ENCODE measurements at regions of chr15 and their contacts with region 1.

Region 1: DNA sequence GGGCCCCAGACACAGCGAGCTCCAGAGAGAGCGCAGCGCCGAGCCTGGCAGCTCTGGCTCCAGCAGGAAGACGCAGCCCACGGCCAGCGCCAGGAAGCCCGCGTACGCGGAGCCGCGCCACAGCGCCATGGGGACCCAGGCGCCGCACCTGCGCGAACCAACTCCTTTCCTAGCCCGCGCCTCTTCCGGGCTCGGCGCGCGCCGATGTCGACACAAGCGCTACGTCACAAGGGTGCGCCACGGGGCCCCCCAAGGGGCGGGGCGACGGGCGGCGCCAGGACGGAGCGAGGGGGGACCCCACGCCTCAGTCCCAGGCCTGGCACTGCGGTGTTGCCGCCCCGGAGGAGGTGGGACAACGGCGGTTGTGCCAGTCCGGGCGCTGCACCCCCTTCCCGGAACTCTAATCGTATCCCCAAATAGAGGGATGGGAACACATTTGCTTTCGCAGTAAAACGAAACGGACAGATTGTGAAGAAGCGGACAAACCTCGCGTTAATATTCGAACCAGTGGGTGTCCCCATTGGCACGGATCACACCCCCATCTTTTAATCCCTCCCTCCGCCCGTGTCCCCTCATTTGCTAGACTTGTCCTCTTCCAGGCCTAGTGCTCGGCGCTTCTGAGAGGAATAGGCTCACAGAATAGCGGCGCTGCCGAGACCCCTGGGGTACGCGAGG is at the start of gene ADPGK:
- DNase-seq: peak; percentile 90
- H3K4me3 Mint-ChIP-seq: peak within 1 kb of the TSS; percentile 93
- H3K27ac Mint-ChIP-seq: peak within 1 kb of the TSS; percentile 95
- H3K4me1 Mint-ChIP-seq: peaks cover 42% of the 10 kb centered on the region
- H3K27me3 Mint-ChIP-seq: no peaks in the 10 kb centered on the region
- total RNA-seq, gene ADPGK: 41.4 to 43.6 TPM

Region 2: DNA sequence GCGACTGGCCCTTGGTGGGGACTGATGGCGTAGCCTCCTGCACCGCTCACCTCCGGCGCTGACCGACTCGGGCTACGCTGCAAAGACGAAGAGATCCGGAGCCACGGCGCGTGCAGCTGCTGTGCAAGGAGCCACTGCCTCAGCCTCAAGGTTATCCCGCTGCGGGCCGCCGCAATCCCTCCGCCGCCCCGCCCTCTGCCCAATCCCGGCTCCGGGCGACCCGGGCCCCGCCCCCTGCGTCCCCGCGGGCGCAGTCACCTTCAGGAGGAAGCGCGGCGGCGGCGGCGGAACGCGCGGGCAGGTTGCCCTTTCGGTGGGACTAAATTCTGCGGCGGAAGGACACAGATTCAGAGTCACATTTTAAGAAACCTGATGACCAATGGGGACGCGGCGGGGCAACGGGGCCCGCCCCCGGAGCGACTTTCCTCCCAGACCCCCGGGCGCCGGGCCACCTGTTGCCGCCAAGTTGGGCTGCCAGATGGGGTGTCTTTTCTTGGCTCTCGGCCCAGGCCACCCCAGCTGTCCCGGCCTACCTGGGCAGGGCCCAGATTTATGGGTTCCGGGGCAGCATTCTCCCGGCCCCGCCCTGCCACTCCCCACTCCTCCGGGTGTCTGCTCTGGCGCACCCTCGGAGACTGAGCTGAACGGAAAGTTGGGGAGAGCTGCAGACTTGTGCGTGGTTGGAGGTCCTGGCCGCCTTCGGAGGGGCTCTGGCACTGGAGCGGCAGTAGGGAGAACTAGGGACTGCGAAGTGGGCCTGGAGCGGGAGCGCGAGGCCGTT is 552.4 kb before region 1 on chr15 and contains the start of gene PKM:
- CTCF ChIA-PET with region 1: no interaction called
- intact Hi-C with region 1: loop called (anchors 5 kb)
- DNase-seq: peak; percentile 98
- H3K4me3 Mint-ChIP-seq: peak within 1 kb of the TSS; percentile 100
- H3K27ac Mint-ChIP-seq: peak within 1 kb of the TSS; percentile 99
- H3K4me1 Mint-ChIP-seq: peaks cover 25% of the 10 kb centered on the region
- H3K27me3 Mint-ChIP-seq: no peaks in the 10 kb centered on the region
- total RNA-seq, gene PKM: 1,794 to 1,797 TPM

Region 3: GRCh38 chr15:72685925-72686794 is 97.5 kb before region 1 on chr15 and contains the starts of genes BBS4 and HIGD2B:
- CTCF ChIA-PET with region 1: no interaction called
- intact Hi-C with region 1: loop called (anchors 1 kb)
- DNase-seq: peak; percentile 91
- H3K4me3 Mint-ChIP-seq: peak within 1 kb of the TSS; percentile 89
- H3K27ac Mint-ChIP-seq: peak within 1 kb of the TSS; percentile 87
- H3K4me1 Mint-ChIP-seq: peaks cover 15% of the 10 kb centered on the region
- H3K27me3 Mint-ChIP-seq: no peaks in the 10 kb centered on the region
- total RNA-seq, gene BBS4: 16.3 to 17.4 TPM
- total RNA-seq, gene HIGD2B: 0.19 to 0.27 TPM

Region 4: DNA sequence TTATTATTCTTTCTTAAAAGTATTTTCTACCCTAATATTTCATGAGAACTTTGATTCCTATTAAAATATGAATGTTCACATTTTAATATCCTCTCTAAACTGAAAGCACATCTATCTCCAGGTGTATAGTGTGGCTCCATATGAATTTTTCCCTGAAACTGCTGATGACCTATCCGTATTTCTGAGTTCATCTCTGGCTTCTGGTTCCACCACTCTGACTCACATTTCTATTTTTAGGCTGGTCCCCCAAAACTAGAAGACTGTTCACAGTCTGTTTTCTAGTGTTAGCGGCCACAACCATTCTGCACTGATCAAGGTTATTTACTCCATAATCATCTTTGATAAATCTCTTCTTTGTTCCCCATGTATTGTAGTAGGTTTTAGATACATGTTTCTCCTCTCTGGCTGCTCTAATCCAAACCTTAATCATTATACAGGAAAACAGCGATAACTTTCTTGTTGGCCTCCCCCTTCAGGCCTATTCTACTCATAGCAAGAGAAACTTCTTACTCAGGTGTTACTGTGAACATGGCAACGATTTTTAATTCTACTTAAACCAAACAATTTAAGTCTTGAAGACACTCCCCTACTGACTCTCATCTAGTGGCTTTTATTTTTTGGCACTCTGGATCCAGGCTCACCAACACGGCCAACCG is 12.9 kb before region 1 on chr15:
- CTCF ChIA-PET with region 1: no interaction called
- intact Hi-C with region 1: loop called (anchors 1 kb)
- DNase-seq: no peak
- H3K4me3 Mint-ChIP-seq: no peak overlapping the region
- H3K27ac Mint-ChIP-seq: peak overlapping the region; percentile 59
- H3K4me1 Mint-ChIP-seq: peaks cover 23% of the 10 kb centered on the region
- H3K27me3 Mint-ChIP-seq: no peaks in the 10 kb centered on the region

Region 5: DNA sequence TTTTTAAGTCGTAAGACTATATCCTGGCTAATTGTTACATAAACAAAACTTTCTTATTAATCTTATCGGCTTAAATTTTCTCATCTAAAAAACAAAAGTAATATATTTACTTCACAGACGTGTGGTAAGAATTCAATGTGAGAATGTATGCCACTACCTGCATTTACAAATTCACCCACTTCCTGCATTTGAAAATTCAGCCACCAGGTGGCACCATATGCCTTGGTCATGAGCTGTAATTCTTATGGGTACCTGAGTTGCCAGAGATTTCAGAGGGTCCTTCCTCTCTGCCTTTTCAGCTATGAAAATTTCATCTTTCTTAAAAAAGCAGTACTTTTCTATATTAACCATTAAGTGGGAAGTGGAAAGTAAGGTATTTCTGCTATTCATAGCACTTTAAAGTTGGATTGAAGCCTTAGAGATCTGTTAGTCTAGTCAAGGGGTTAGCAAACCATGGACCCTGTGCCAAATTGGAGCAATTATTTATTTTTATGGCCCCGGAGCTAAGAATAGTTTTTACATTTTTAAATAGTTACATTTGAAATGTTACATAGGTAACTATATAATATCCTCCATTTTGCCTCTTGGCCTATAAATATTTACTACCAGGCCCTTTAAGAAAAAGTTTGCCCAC is 457.3 kb after region 1 on chr15:
- CTCF ChIA-PET with region 1: interaction called, 4 read pairs
- intact Hi-C with region 1: loop called (anchors 5 kb)
- DNase-seq: peak; percentile 89
- H3K4me3 Mint-ChIP-seq: no peak overlapping the region
- H3K27ac Mint-ChIP-seq: no peak overlapping the region
- H3K4me1 Mint-ChIP-seq: no peaks in the 10 kb centered on the region
- H3K27me3 Mint-ChIP-seq: no peaks in the 10 kb centered on the region

Region 6: GRCh38 chr15:73697033-73697467 is 913.4 kb after region 1 on chr15:
- CTCF ChIA-PET with region 1: no interaction called
- intact Hi-C with region 1: loop called (anchors 2 kb)
- DNase-seq: peak; percentile 95
- H3K4me3 Mint-ChIP-seq: peak overlapping the region; percentile 9
- H3K27ac Mint-ChIP-seq: peak overlapping the region; percentile 35
- H3K4me1 Mint-ChIP-seq: peaks cover 24% of the 10 kb centered on the region
- H3K27me3 Mint-ChIP-seq: peaks cover 60% of the 10 kb centered on the region

Measured in activated naive CD4-positive, alpha-beta T cell treated with anti-CD3 and anti-CD28 coated beads for 36 hours (primary cell).